ENCODE measurements at regions of chr10 and their contacts with region 1.

Region 1: GRCh38 chr10:93746844-93747284 is 10.9 kb upstream of the LGI1 start:
- DNase-seq: peak; percentile 70
- ATAC-seq: peak; percentile 94
- H3K4me3 ChIP-seq: peak overlapping the region in 1 of 2 experiments; percentile 12; a peak in 1 of 4 replicates
- H3K27ac ChIP-seq: 0 out of 2 replicates have a peak overlapping the region, but pooled peaks have one; percentile 8
- H3K4me1 ChIP-seq: peaks cover 0 to 21% of the 10 kb centered on the region in 2 experiments; a peak in 2 of 4 replicates
- H3K27me3 ChIP-seq: no peaks in the 10 kb centered on the region
- CTCF ChIP-seq: peak; percentile 72 to 77 (median 76); a peak in 5 of 6 replicates
- POLR2A ChIP-seq: no peak
- RAD21 ChIP-seq: peak; percentile 66

Region 2: DNA sequence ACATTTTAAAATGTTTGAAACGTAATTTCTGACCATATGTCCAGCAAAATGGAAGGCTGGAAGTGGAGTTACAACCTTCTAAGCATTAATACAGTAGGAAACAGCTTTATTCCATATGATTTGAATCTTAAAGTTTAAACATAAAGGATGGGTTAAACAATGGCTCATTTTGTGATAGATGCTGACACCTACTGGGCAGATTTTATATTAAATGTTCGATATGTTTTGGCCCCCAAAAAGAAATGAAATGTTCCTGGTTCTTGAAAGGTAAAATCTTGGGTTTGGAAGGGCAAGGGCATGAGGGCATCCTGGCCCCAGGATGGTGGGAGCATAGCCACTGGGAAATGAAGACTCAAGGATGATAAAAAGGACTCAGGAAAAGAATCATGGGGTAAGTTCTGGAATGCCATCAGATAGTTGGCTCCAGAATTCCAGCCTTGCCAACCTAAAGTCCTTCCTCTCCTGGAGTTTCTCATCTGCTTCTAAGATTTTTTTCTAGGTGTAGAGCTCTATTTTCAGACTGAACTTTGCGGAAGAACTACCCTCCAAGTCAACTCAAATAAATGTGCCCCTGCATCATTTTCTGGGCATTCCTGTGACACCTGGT is 112.3 kb after region 1 on chr10:
- CTCF ChIA-PET with region 1: interaction called, 11 read pairs
- POLR2A ChIA-PET with region 1: no interaction called
- RAD21 ChIA-PET with region 1: no interaction called
- intact Hi-C with region 1: loop called (anchors 2 kb)
- DNase-seq: peak; percentile 3
- ATAC-seq: peak; percentile 57
- H3K4me3 ChIP-seq: no peak overlapping the region
- H3K27ac ChIP-seq: no peak overlapping the region
- H3K4me1 ChIP-seq: no peaks in the 10 kb centered on the region
- H3K27me3 ChIP-seq: no peaks in the 10 kb centered on the region
- CTCF ChIP-seq: peak; percentile 19 to 71 (median 63); a peak in 5 of 6 replicates
- POLR2A ChIP-seq: no peak
- RAD21 ChIP-seq: peak; percentile 74

Measured in HCT116 (cell line).